Endothelial cell of umbilical vein (primary cell): ENCODE measurements at regions of chr17 and their contacts with region 1.

Region 1: DNA sequence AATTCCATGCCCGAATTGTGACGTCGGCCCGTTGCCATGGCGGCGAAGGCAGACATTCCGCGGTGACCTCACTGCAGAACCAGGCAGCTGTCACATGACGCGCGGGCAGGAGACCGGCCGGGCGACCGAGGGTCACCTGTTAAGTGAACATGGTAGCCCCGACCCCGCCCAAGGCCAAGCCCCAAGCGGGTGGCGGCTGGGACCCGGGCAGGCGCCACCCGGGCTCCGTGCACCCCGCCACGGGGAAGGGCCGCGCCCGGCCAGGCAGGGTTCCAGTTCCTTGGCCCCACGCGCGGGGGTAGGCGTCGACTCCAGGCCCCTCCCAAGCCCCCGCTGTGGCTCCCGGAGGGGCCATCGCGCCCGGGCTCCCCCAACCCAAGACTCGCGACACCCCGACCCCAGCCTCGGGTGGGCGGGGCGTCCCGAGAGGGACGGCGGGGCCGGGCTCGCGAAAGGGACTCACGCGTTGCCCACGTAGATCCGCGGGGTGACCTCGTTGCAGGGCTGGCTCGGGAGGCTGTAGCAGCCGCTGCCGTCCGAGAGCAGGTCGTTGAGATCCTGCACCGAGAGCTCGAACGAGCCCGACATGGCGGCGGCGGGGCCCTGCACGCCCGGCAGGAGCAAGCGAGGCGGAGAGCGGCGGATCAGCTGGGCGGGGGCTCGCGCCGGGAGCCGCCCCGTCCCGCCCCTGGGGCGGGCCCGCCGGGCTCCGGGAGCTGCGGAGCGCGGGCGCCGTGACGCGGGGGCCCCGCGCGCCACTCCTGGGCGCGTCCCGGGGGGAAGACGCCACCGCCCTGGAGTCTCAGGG is at the start of gene DUSP3:
- DNase-seq: peak; percentile 89
- H3K4me3 ChIP-seq: peak within 1 kb of the TSS; percentile 47 to 98 (median 63)
- H3K27ac ChIP-seq: peak within 1 kb of the TSS; percentile 91
- H3K4me1 ChIP-seq: peaks cover 14% of the 10 kb centered on the region
- H3K27me3 ChIP-seq: peaks cover 0 to 3% of the 10 kb centered on the region in 2 experiments
- CTCF ChIP-seq: no peak
- POLR2A ChIP-seq: peak; percentile 88
- total RNA-seq, gene DUSP3: 51.4 and 57.7 TPM in 2 replicates

Region 2: GRCh38 chr17:43766413-43767052 is 12.0 kb before region 1 on chr17:
- CTCF ChIA-PET with region 1: interaction called, 14 read pairs
- POLR2A ChIA-PET with region 1: no interaction called
- dilution Hi-C with region 1: no loop called
- intact Hi-C with region 1: no loop called
- DNase-seq: peak; percentile 56
- H3K4me3 ChIP-seq: no peak overlapping the region
- H3K27ac ChIP-seq: no peak overlapping the region
- H3K4me1 ChIP-seq: peaks cover 2% of the 10 kb centered on the region
- H3K27me3 ChIP-seq: no peaks in the 10 kb centered on the region
- CTCF ChIP-seq: peak; percentile 84 to 93
- POLR2A ChIP-seq: no peak

Region 3: DNA sequence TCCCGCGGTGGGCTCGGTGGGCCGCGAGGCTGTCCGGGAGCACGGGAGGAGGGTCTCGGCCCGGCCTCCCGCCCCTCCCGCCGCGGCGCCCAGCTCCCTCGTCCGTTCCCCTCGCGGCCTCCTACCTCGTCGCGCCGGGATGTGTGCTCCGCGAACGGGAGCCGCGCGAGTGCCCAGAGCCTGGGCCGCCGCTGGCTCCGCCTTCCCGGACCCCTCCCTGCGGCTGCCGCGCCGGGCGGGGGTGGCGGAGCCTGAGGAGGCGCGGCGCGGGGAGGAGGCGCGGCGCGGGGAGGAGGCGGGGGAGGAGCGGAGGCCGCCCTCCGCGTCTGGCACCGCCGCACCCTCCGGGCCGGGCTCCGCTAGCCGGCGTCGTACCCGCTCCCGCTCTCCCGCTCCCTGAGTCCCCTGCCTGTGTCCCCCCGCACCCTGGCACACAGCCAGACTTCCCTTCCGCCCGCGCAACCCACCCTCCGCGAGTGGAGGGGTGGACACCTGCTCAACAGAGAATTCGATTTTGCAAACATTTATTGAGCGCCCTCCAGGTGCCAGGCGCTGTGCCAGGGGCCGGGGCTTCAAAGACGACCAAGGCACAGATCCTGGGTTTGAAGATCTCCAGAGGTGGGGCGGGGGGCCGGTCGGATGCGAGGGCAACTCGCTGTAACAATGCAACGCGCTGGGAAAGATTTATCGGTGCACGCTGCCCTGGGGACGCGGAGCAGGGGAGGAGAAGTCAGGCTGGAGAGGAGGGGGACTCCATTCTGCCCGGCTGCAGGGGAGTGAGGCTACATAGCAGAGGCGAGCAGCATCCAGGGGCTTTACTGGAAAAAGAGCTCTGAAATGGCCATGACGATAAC is 54.7 kb after region 1 on chr17 and contains the start of gene MPP3:
- CTCF ChIA-PET with region 1: no interaction called
- POLR2A ChIA-PET with region 1: no interaction called
- dilution Hi-C with region 1: no loop called
- intact Hi-C with region 1: loop called (anchors 2 kb)
- DNase-seq: peak; percentile 66
- H3K4me3 ChIP-seq: peak within 1 kb of the TSS; percentile 33 to 85 (median 47)
- H3K27ac ChIP-seq: no peak within 1 kb of the TSS
- H3K4me1 ChIP-seq: peaks cover 2% of the 10 kb centered on the region
- H3K27me3 ChIP-seq: no peaks in the 10 kb centered on the region
- CTCF ChIP-seq: no peak
- POLR2A ChIP-seq: peak; percentile 69
- total RNA-seq, gene MPP3: 10.8 and 11.3 TPM in 2 replicates

Region 4: DNA sequence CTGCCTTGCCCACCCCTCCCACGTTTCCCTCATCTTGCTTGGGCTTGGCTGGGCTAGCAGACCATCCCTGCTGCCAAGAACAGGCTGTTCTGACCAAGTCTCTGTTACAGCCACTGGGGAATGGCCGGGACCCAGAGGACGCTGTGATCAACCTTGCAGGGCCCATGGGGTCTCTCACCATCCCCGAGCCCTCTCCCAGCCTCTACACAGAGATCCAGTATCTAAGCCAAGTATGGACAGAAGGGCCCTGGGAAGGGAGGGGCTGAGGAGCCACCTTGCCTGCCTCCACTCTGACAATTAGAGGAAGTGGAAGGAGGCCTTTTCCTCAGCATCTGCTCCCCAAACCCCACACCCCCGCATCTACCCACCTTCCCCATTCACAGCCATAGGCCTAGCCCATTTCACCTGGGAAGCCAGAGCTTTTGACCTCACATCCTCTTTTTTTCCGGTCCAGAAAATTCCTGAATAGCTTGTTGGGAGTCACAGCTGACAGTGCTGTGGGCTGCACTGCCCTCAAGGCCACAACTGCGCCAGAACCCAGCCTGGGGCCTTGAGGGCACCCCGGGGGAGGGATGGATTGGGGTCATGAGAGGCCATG is 82.6 kb after region 1 on chr17:
- CTCF ChIA-PET with region 1: no interaction called
- POLR2A ChIA-PET with region 1: no interaction called
- dilution Hi-C with region 1: no loop called
- intact Hi-C with region 1: no loop called
- DNase-seq: no peak
- H3K4me3 ChIP-seq: no peak overlapping the region
- H3K27ac ChIP-seq: no peak overlapping the region
- H3K4me1 ChIP-seq: no peaks in the 10 kb centered on the region
- H3K27me3 ChIP-seq: peaks cover 8 to 13% of the 10 kb centered on the region in 2 experiments
- CTCF ChIP-seq: no peak
- POLR2A ChIP-seq: no peak

Region 5: GRCh38 chr17:43927060-43927864 is 148.7 kb after region 1 on chr17:
- CTCF ChIA-PET with region 1: no interaction called
- POLR2A ChIA-PET with region 1: no interaction called
- dilution Hi-C with region 1: no loop called
- intact Hi-C with region 1: no loop called
- DNase-seq: no peak
- H3K4me3 ChIP-seq: no peak overlapping the region
- H3K27ac ChIP-seq: no peak overlapping the region
- H3K4me1 ChIP-seq: no peaks in the 10 kb centered on the region
- H3K27me3 ChIP-seq: peaks cover 44 to 45% of the 10 kb centered on the region in 2 experiments
- CTCF ChIP-seq: no peak
- POLR2A ChIP-seq: no peak